HepG2 (cell line): ENCODE measurements at regions of chr18 and their contacts with region 1.

Region 1: DNA sequence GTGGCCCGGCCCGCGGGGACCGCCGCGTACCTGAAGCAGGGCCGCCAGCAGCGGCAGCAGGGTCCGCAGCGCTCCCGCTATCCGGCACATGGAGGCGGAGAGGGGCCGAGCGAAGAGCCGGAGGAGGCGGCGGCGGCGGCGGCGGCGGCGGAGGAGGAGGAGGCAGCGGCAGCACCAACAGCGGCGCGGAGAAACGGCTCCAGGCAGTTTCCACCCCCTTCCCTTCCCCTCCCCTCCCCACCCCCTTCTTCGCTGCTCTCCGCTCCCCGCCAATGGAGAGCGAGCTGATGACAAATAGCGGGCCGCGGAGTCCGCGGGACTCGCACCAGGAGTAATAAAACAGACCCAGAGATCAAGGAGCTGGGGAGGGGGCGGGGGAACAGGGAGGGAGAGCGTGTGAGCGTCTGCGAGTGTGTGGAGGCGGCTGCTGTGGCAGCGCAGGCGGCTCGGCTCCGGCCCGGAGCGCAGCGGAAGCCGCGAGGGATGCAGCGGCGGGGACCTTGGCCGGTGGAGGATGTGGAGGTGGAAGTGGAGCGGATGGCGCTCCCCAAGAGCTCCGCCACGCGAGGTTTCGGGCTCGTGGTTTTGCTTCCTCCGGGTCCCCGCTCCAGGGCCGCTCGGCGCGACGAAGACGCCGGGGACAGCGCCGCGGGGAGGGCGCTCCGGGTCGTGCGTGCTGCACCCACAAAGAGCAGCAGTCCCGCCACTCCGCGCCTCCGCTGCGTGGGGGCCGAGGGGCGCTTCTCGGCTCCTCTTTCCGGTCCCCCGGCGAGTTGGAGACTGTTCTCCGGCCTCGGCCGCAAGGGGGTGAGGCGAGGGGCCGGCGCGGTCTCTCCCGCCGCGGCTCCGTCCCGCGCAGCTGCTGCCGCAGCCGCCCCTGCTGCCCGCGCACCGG is at the start of gene CDH2:
- DNase-seq: peak; percentile 77
- ATAC-seq: peak; percentile 60
- H3K4me3 ChIP-seq: peak within 1 kb of the TSS; percentile 85 to 96 (median 88)
- H3K27ac ChIP-seq: peak within 1 kb of the TSS; percentile 68
- H3K4me1 ChIP-seq: peaks cover 32% of the 10 kb centered on the region
- H3K27me3 ChIP-seq: no peaks in the 10 kb centered on the region; a peak in 1 of 5 replicates
- CTCF ChIP-seq: peak; percentile 36; the same call in 1 of the 2 replicates
- EP300 ChIP-seq: no peak
- POLR2A ChIP-seq: peak in 1 of 2 experiments; percentile 55; a peak in 2 of 4 replicates
- RAD21 ChIP-seq: peak; percentile 13; the same call in 1 of the 2 replicates
- total RNA-seq, gene CDH2: 14.6 and 18.6 TPM in 2 replicates

Region 2: DNA sequence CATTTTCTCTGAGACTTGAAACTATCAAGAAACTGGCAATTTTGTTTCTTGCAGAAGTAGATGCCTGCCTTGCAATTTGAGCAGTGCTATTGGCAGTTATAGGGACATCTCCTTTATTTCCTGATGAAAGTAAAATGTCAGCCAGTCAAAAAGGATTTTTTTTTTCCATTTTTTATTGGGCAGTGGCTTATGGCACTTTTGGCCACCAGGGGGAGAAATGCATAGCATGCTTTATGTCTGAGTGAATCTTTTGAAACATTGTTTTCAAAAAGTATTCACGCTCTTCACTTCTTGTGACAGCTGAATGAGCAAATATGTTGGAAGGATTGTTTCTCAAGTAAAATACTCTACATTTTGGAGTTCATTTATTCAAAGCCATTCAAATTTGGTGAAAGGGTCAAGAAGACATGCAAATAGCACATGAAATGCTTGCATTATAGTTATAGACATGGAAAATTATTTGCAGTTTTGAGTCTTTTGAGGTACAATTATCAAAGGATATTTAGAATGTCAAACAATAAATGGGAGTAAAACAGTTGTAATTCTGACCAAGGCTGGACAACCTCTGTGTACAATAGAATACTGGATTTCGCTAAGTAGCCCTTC is 491.3 kb before region 1 on chr18:
- CTCF ChIA-PET with region 1: no interaction called
- POLR2A ChIA-PET with region 1: no interaction called
- in situ Hi-C with region 1: loop called (anchors 25 kb)
- intact Hi-C with region 1: no loop called
- DNase-seq: peak; percentile 14
- ATAC-seq: no peak
- H3K4me3 ChIP-seq: no peak overlapping the region
- H3K27ac ChIP-seq: no peak overlapping the region
- H3K4me1 ChIP-seq: no peaks in the 10 kb centered on the region
- H3K27me3 ChIP-seq: no peaks in the 10 kb centered on the region
- CTCF ChIP-seq: peak; percentile 51
- EP300 ChIP-seq: no peak
- POLR2A ChIP-seq: no peak
- RAD21 ChIP-seq: no peak

Region 3: DNA sequence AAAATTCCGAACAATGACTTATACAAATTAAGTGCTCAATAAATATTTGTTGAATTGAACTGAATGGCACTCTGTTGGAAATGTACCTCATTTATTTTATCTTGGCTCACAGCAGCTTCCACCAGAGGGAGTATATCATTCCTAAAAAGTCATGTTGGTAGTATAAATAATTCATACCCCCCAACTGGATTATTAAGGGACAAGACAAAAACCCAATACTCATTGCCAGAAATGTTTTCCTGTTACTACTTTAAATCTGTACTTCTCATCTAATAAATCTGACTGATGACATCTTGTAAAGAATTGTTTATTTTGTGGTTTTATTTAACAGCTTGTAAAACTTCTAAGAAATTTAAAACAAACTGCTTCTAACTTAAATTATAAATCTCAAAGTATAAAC is 164.1 kb before region 1 on chr18:
- CTCF ChIA-PET with region 1: no interaction called
- POLR2A ChIA-PET with region 1: no interaction called
- in situ Hi-C with region 1: loop called (anchors 10 kb)
- intact Hi-C with region 1: loop called (anchors 1 kb)
- DNase-seq: peak; percentile 13
- ATAC-seq: no peak
- H3K4me3 ChIP-seq: no peak overlapping the region
- H3K27ac ChIP-seq: no peak overlapping the region
- H3K4me1 ChIP-seq: peaks cover 8% of the 10 kb centered on the region; the same call in 1 of the 2 replicates
- H3K27me3 ChIP-seq: no peaks in the 10 kb centered on the region
- CTCF ChIP-seq: no peak; the same call in 1 of the 2 replicates
- EP300 ChIP-seq: no peak
- POLR2A ChIP-seq: no peak
- RAD21 ChIP-seq: no peak

Region 4: GRCh38 chr18:28050545-28050944 is 126.6 kb before region 1 on chr18:
- CTCF ChIA-PET with region 1: no interaction called
- POLR2A ChIA-PET with region 1: no interaction called
- in situ Hi-C with region 1: no loop called
- intact Hi-C with region 1: no loop called
- DNase-seq: no peak
- ATAC-seq: no peak
- H3K4me3 ChIP-seq: no peak overlapping the region
- H3K27ac ChIP-seq: no peak overlapping the region
- H3K4me1 ChIP-seq: no peaks in the 10 kb centered on the region
- H3K27me3 ChIP-seq: no peaks in the 10 kb centered on the region
- CTCF ChIP-seq: no peak
- EP300 ChIP-seq: no peak
- POLR2A ChIP-seq: no peak
- RAD21 ChIP-seq: no peak

Region 5: DNA sequence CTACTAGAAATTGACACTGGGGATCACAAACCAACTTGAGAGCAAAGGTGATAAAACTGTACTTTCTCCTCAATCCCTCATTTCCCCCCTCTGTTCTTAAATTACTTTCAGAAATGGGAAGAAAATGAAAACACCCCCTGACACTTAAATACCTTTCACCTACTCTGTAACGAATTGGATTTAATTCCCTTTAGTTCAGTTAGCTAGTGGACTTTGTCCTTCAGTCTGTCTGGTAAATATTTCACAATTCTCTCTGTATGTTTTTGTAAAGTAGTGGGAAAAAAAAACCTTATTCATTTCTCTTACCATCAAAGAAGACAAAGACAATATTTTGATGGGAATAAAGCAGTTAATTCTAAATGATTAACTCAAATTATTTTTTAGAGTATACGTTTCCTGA is 86.0 kb before region 1 on chr18:
- CTCF ChIA-PET with region 1: no interaction called
- POLR2A ChIA-PET with region 1: interaction called, 4 read pairs
- in situ Hi-C with region 1: no loop called
- intact Hi-C with region 1: loop called (anchors 5 kb)
- DNase-seq: peak; percentile 84
- ATAC-seq: peak; percentile 72
- H3K4me3 ChIP-seq: peak overlapping the region; percentile 16 to 53 (median 33); a peak in 4 of 6 replicates
- H3K27ac ChIP-seq: peak overlapping the region; percentile 71
- H3K4me1 ChIP-seq: peaks cover 71% of the 10 kb centered on the region
- H3K27me3 ChIP-seq: no peaks in the 10 kb centered on the region
- CTCF ChIP-seq: no peak
- EP300 ChIP-seq: peak in 1 of 2 experiments; percentile 87; a peak in 3 of 4 replicates
- POLR2A ChIP-seq: no peak
- RAD21 ChIP-seq: no peak